Activated T-helper 1 cell treated with anti-CD3 and anti-CD28 coated beads, Interleukin-12 subunit alpha, Interleukin-12 subunit beta, Interleukin-2, Interleukin-4 antibody, amounts not matched to agents 30 ng/mL and 10 ng/mL and 1 ng/mL, durations not matched to agents 14 hours and 24 hours and 36 hours (primary cell): ENCODE measurements at regions of chrX and their contacts with region 1.

Region 1: GRCh38 chrX:7170903-7171302 is 22.9 kb upstream of the PUDP start:
- DNase-seq: peak; percentile 1
- H3K4me3 Mint-ChIP-seq: no peak overlapping the region
- H3K27ac Mint-ChIP-seq: no peak overlapping the region
- H3K4me1 Mint-ChIP-seq: no peaks in the 10 kb centered on the region
- H3K27me3 Mint-ChIP-seq: no peaks in the 10 kb centered on the region

Region 2: GRCh38 chrX:7132335-7133049 is 38.4 kb before region 1 on chrX:
- intact Hi-C with region 1: loop called (anchors 1 kb)
- DNase-seq: no peak
- H3K4me3 Mint-ChIP-seq: no peak overlapping the region
- H3K27ac Mint-ChIP-seq: no peak overlapping the region
- H3K4me1 Mint-ChIP-seq: peaks cover 16% of the 10 kb centered on the region
- H3K27me3 Mint-ChIP-seq: no peaks in the 10 kb centered on the region

Region 3: GRCh38 chrX:7201496-7201895 is 30.6 kb after region 1 on chrX:
- intact Hi-C with region 1: no loop called
- DNase-seq: no peak
- H3K4me3 Mint-ChIP-seq: no peak overlapping the region
- H3K27ac Mint-ChIP-seq: no peak overlapping the region
- H3K4me1 Mint-ChIP-seq: no peaks in the 10 kb centered on the region
- H3K27me3 Mint-ChIP-seq: no peaks in the 10 kb centered on the region

Region 4: GRCh38 chrX:7252013-7252610 is 81.2 kb after region 1 on chrX:
- intact Hi-C with region 1: no loop called
- DNase-seq: no peak
- H3K4me3 Mint-ChIP-seq: no peak overlapping the region
- H3K27ac Mint-ChIP-seq: no peak overlapping the region
- H3K4me1 Mint-ChIP-seq: no peaks in the 10 kb centered on the region
- H3K27me3 Mint-ChIP-seq: peaks cover 2% of the 10 kb centered on the region

Region 5: GRCh38 chrX:7264399-7264798 is 93.5 kb after region 1 on chrX:
- intact Hi-C with region 1: no loop called
- DNase-seq: no peak
- H3K4me3 Mint-ChIP-seq: no peak overlapping the region
- H3K27ac Mint-ChIP-seq: no peak overlapping the region
- H3K4me1 Mint-ChIP-seq: no peaks in the 10 kb centered on the region
- H3K27me3 Mint-ChIP-seq: no peaks in the 10 kb centered on the region

Region 6: DNA sequence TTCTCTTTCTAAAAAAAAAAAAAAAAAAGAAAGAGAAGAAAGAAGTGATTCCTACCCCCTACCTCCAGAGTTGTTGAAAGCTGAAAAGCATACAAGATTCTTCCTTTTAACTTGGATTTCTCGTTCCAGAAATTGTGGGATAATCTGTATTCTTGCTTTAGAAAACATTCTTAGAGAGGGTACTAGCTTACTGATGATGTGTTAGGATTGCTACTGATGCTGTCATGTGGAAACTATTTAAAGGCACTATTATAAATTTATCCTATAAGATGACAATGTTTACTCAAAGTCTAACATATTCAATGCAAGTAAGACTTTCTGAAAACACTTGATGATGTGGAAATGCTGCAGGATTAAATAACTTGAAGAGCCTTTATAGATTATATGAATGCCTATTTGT is 181.0 kb after region 1 on chrX:
- intact Hi-C with region 1: no loop called
- DNase-seq: no peak
- H3K4me3 Mint-ChIP-seq: no peak overlapping the region
- H3K27ac Mint-ChIP-seq: no peak overlapping the region
- H3K4me1 Mint-ChIP-seq: no peaks in the 10 kb centered on the region
- H3K27me3 Mint-ChIP-seq: no peaks in the 10 kb centered on the region